AG04449 (cell line): ENCODE measurements at regions of chr7 and their contacts with region 1.

Region 1: GRCh38 chr7:27745064-27745583 is 5.2 kb downstream of the TAX1BP1 start:
- DNase-seq: no peak
- H3K4me3 ChIP-seq: no peak overlapping the region
- CTCF ChIP-seq: peak; percentile 62

Region 2: GRCh38 chr7:27774717-27775328 is 29.7 kb after region 1 on chr7:
- CTCF ChIA-PET with region 1: interaction called, 26 read pairs
- POLR2A ChIA-PET with region 1: no interaction called
- DNase-seq: no peak
- H3K4me3 ChIP-seq: no peak overlapping the region
- CTCF ChIP-seq: peak; percentile 58